B cell (primary cell): ENCODE measurements at regions of chr1 and their contacts with region 1.

Region 1: GRCh38 chr1:9292361-9293240 is at the start of gene SPSB1:
- DNase-seq: peak; percentile 86
- ATAC-seq: peak; percentile 68
- H3K4me3 ChIP-seq: peak within 1 kb of the TSS; percentile 41 to 70 (median 59)
- H3K4me3 Mint-ChIP-seq: peak within 1 kb of the TSS; percentile 64
- H3K27ac ChIP-seq: peak within 1 kb of the TSS in 1 of 2 donors; percentile 47
- H3K27ac Mint-ChIP-seq: peak within 1 kb of the TSS; percentile 72
- H3K4me1 ChIP-seq: peaks cover 6 to 23% of the 10 kb centered on the region in 2 donors
- H3K4me1 Mint-ChIP-seq: peaks cover 7% of the 10 kb centered on the region
- H3K27me3 ChIP-seq: no peaks in the 10 kb centered on the region
- H3K27me3 Mint-ChIP-seq: no peaks in the 10 kb centered on the region
- CTCF ChIP-seq: no peak
- total RNA-seq, gene SPSB1: 8.9 and 9.4 TPM in 2 replicates

Region 2: DNA sequence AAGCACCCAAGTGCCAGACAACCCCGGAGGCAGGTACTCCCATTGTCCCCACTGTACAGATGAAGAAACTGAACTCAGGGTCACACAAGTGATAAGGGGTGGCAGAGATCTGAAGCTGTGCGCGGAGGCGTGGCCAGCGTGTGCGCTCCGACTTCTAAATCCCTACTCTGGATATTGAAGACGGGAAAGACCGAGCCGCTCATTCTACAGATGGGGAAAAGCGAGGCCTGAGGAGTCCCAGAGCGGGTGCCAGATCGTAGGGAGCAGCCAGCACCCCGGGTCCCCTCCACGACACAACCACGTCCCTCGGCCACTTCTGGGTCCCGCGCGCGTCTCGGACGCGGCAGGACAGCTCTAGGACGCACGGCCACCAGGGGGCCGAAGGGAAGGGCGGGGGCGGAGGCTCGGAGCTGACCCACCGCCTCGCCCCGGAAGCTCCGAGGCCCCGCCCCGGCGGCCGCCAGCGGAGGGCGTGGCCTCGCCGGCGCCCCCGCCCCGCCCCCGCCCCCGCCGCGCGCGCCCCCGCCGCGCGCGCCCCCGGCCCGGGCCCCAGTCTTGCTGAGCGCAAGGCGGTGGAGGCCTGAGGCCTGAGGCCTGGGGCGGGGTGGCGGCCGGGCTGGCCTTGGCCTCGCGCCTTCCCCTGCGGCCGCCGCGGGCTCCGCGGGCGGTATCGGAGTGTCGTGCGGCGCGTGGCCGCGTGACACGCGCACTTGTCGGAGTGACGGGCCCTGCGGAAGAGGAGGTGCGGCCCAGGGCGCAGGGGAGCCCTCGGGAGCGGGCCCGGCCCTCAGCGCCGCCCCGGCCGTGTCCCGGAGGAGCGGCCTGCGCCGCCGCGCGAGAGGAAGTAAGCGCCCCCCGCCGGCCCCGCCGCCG is 58.1 kb before region 1 on chr1 and contains the start of gene H6PD:
- CTCF ChIA-PET with region 1: interaction called, 15 read pairs
- POLR2A ChIA-PET with region 1: no interaction called
- intact Hi-C with region 1: loop called (anchors 1 kb)
- DNase-seq: peak; percentile 92
- ATAC-seq: peak; percentile 83
- H3K4me3 ChIP-seq: peak within 1 kb of the TSS; percentile 55 to 80 (median 73)
- H3K4me3 Mint-ChIP-seq: peak within 1 kb of the TSS; percentile 96
- H3K27ac ChIP-seq: peak within 1 kb of the TSS; percentile 79 to 88
- H3K27ac Mint-ChIP-seq: peak within 1 kb of the TSS; percentile 96
- H3K4me1 ChIP-seq: peaks cover 19 to 36% of the 10 kb centered on the region in 2 donors
- H3K4me1 Mint-ChIP-seq: peaks cover 41% of the 10 kb centered on the region
- H3K27me3 ChIP-seq: no peaks in the 10 kb centered on the region
- H3K27me3 Mint-ChIP-seq: no peaks in the 10 kb centered on the region
- CTCF ChIP-seq: peak; percentile 63
- total RNA-seq, gene H6PD: 30.2 and 31.4 TPM in 2 replicates

Region 3: DNA sequence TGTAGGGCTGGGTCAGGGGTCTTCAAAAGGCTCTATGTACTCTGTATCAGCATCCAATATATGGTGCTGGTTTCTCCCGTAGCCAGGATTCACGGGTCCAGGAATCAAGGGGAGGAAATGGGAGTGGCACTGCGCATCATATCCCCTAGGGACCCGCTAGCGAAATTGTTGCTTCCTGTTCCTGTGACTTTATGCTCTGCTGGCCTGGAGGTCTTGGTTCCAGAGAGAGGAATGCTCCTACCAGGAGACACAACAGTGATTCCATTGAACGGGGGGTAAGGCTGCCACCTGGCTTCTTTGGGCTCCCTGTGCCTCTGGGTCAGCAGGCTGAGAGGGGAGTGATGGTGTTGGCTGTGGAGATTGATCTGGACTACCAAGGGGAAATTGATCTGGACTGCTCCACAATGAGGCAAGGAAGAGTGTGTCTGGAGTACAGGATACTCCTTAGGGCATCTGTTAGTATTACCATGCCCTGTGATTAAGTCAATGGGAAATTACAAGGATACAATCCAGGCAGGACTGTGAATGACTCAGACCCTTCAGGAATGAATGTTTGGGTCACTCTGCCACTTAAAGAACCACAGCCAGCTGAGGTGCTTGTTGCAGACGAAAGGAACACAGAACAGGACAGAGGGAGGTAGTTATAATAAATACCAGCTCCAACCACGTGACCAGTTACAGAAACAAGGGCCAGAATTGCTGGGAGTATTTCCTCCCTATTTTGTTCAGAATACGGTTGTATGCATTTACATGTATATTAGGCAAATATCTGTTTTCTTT is 10.3 kb after region 1 on chr1:
- CTCF ChIA-PET with region 1: no interaction called
- POLR2A ChIA-PET with region 1: no interaction called
- intact Hi-C with region 1: no loop called
- DNase-seq: peak; percentile 56
- ATAC-seq: peak; percentile 49
- H3K4me3 ChIP-seq: peak overlapping the region in 1 of 5 experiments; percentile 13
- H3K4me3 Mint-ChIP-seq: peak overlapping the region; percentile 58
- H3K27ac ChIP-seq: no peak overlapping the region
- H3K27ac Mint-ChIP-seq: peak overlapping the region; percentile 52
- H3K4me1 ChIP-seq: peaks cover 15 to 28% of the 10 kb centered on the region in 2 donors
- H3K4me1 Mint-ChIP-seq: peaks cover 42% of the 10 kb centered on the region
- H3K27me3 ChIP-seq: no peaks in the 10 kb centered on the region
- H3K27me3 Mint-ChIP-seq: no peaks in the 10 kb centered on the region
- CTCF ChIP-seq: no peak

Region 4: GRCh38 chr1:9399510-9400424 is 107.2 kb after region 1 on chr1:
- CTCF ChIA-PET with region 1: interaction called, 14 read pairs
- POLR2A ChIA-PET with region 1: no interaction called
- intact Hi-C with region 1: no loop called
- DNase-seq: no peak
- ATAC-seq: peak; percentile 39
- H3K4me3 ChIP-seq: no peak overlapping the region
- H3K4me3 Mint-ChIP-seq: no peak overlapping the region
- H3K27ac ChIP-seq: no peak overlapping the region
- H3K27ac Mint-ChIP-seq: peak overlapping the region; percentile 10
- H3K4me1 ChIP-seq: peaks cover 10 to 28% of the 10 kb centered on the region in 2 donors
- H3K4me1 Mint-ChIP-seq: peaks cover 16% of the 10 kb centered on the region
- H3K27me3 ChIP-seq: no peaks in the 10 kb centered on the region
- H3K27me3 Mint-ChIP-seq: no peaks in the 10 kb centered on the region
- CTCF ChIP-seq: no peak

Region 5: DNA sequence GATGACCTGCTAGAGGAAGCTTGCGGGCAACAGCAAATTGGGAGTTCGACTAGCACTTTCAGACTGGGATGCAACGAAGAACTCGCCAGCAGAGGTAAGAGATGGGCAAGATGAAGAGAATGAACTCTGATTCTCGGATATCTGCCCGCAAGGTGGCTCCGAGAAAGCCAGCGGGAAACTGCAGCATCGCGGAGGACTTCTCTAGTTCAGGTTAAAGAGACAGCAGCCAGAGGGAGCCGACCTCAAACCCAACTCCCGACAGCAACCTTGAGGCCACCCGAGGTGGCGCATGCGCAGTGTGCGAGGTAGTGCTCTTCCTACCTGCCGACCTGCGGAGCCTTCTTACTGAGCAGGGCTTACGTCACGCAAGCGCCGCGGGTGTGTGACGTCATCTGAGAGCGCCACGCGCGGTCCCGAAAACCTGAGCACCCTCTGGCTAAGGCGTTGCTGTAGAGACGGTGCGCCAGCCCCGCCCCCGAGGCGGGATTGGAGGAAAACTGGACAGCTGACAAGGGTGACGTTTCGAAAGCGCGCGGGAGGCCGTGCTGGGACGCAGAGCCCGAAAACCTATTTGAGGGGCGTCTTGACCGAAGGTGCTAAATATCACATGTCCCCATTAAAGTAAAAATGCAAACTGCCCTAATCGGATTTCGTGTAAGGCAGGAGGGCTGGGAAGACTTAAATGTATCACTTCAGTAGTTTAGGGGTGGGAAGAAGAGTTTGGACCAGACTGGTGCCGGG is 136.2 kb after region 1 on chr1:
- CTCF ChIA-PET with region 1: interaction called, 25 read pairs
- POLR2A ChIA-PET with region 1: interaction called, 7 read pairs
- intact Hi-C with region 1: loop called (anchors 1 kb)
- DNase-seq: peak; percentile 100
- ATAC-seq: peak; percentile 74
- H3K4me3 ChIP-seq: peak overlapping the region; percentile 58 to 91 (median 77)
- H3K4me3 Mint-ChIP-seq: peak overlapping the region; percentile 99
- H3K27ac ChIP-seq: peak overlapping the region; percentile 74 to 85
- H3K27ac Mint-ChIP-seq: peak overlapping the region; percentile 98
- H3K4me1 ChIP-seq: peaks cover 48 to 56% of the 10 kb centered on the region in 2 donors
- H3K4me1 Mint-ChIP-seq: peaks cover 54% of the 10 kb centered on the region
- H3K27me3 ChIP-seq: no peaks in the 10 kb centered on the region
- H3K27me3 Mint-ChIP-seq: no peaks in the 10 kb centered on the region
- CTCF ChIP-seq: peak; percentile 19

Region 6: GRCh38 chr1:9449106-9449627 is 156.6 kb after region 1 on chr1:
- CTCF ChIA-PET with region 1: interaction called, 352 read pairs
- POLR2A ChIA-PET with region 1: no interaction called
- intact Hi-C with region 1: no loop called
- DNase-seq: no peak
- ATAC-seq: no peak
- H3K4me3 ChIP-seq: no peak overlapping the region
- H3K4me3 Mint-ChIP-seq: peak overlapping the region; percentile 9
- H3K27ac ChIP-seq: no peak overlapping the region
- H3K27ac Mint-ChIP-seq: no peak overlapping the region
- H3K4me1 ChIP-seq: peaks cover 3 to 6% of the 10 kb centered on the region in 2 donors
- H3K4me1 Mint-ChIP-seq: peaks cover 11% of the 10 kb centered on the region
- H3K27me3 ChIP-seq: peaks cover 0 to 11% (median 1%) of the 10 kb centered on the region in 4 experiments
- H3K27me3 Mint-ChIP-seq: no peaks in the 10 kb centered on the region
- CTCF ChIP-seq: no peak

Region 7: GRCh38 chr1:9494929-9495758 is 202.5 kb after region 1 on chr1:
- CTCF ChIA-PET with region 1: interaction called, 239 read pairs
- POLR2A ChIA-PET with region 1: interaction called, 6 read pairs
- intact Hi-C with region 1: loop called (anchors 1 kb)
- DNase-seq: peak; percentile 81
- ATAC-seq: peak; percentile 71
- H3K4me3 ChIP-seq: peak overlapping the region in 3 of 5 experiments; percentile 44 to 64 (median 44)
- H3K4me3 Mint-ChIP-seq: peak overlapping the region; percentile 80
- H3K27ac ChIP-seq: no peak overlapping the region
- H3K27ac Mint-ChIP-seq: no peak overlapping the region
- H3K4me1 ChIP-seq: peaks cover 9 to 10% of the 10 kb centered on the region in 2 donors
- H3K4me1 Mint-ChIP-seq: peaks cover 8% of the 10 kb centered on the region
- H3K27me3 ChIP-seq: peaks cover 0 to 6% (median 2%) of the 10 kb centered on the region in 4 experiments
- H3K27me3 Mint-ChIP-seq: peaks cover 17% of the 10 kb centered on the region
- CTCF ChIP-seq: peak; percentile 98